Activated naive CD4-positive, alpha-beta T cell treated with anti-CD3 and anti-CD28 coated beads for 36 hours (primary cell): ENCODE measurements at regions of chr12 and their contacts with region 1.

Region 1: DNA sequence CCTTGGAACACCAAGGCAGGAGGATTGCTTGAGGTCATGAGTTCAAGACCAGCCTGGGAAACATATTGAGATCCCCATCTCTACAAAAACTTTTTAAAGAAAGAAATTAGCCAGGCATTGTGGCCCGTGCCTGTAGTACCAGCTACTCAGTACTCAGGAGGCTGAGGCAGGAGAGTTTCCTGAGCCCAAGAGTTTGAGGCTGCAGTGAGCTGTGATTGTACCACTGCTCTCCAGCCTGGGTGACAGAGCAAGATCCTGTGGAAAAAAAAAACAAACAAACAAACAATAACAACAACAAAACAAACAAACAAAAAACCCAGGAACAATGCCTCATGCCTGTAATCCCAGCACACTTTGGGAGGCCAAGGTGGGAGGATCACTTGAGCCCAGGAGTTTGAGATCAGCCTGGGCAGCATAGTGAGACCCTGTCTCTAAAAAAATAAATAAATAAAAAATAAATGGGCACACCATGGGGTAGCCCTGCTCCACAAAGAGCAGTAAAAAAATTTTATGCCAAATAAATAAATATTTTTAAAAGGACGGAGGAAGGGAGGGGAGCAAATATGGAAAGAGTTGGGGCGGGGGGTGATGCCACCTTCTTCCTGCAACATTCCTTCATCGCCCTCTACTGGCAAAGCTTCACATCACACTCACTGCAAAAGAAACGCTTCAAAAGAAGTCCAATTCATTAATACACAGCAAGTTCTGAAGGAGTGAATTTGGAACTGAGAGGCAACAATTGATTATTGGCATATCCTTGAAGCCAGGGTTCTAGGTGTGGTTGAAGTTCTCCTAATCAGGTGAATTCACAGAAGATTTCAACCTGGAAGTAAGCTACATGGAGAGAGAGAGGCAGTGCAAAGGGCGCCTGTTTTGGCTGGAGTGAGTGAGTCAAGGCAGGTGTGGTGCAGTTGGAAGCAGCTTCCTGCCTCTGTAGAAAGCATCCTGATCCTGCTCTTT is 8.8 kb upstream of the GNPTAB start:
- DNase-seq: peak; percentile 84
- H3K4me3 Mint-ChIP-seq: no peak overlapping the region
- H3K27ac Mint-ChIP-seq: no peak overlapping the region
- H3K4me1 Mint-ChIP-seq: peaks cover 5% of the 10 kb centered on the region
- H3K27me3 Mint-ChIP-seq: no peaks in the 10 kb centered on the region

Region 2: DNA sequence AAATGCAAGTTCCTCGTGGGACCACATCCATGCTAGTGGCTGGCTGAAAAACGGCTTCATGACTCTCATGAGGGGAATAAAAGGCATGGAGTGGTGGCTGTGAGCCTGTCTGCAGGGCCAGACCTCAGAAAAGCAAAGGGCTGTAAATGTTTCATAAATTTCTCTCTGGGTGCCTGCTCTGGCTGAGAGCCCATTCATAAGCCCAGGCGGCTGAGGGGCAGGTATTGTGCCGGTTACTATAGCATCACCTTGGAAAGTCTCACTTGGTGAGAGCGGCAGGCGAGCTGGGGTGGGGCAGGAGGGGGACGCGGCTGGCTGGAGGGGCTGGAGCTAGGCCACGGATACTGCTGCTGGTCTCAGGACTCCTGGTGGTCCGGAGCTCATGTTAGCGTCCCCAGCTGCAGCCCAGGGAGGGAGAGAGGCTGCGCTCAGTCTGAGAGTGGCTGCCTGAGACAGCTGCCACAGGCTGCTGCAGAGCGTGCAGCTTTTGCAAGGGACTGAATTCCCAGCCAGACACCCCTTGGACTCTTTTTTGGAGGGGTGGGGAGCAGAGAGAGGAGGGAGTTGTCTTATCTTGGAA is 1482.9 kb before region 1 on chr12 and contains the start of gene SLC17A8:
- CTCF ChIA-PET with region 1: no interaction called
- intact Hi-C with region 1: no loop called
- DNase-seq: no peak
- H3K4me3 Mint-ChIP-seq: no peak within 1 kb of the TSS
- H3K27ac Mint-ChIP-seq: no peak within 1 kb of the TSS
- H3K4me1 Mint-ChIP-seq: no peaks in the 10 kb centered on the region
- H3K27me3 Mint-ChIP-seq: peaks cover 20% of the 10 kb centered on the region
- total RNA-seq, gene SLC17A8: not detected

Region 3: GRCh38 chr12:101759396-101760047 is 80.1 kb before region 1 on chr12:
- CTCF ChIA-PET with region 1: interaction called, 13 read pairs
- intact Hi-C with region 1: no loop called
- DNase-seq: no peak
- H3K4me3 Mint-ChIP-seq: no peak overlapping the region
- H3K27ac Mint-ChIP-seq: no peak overlapping the region
- H3K4me1 Mint-ChIP-seq: no peaks in the 10 kb centered on the region
- H3K27me3 Mint-ChIP-seq: no peaks in the 10 kb centered on the region

Region 4: DNA sequence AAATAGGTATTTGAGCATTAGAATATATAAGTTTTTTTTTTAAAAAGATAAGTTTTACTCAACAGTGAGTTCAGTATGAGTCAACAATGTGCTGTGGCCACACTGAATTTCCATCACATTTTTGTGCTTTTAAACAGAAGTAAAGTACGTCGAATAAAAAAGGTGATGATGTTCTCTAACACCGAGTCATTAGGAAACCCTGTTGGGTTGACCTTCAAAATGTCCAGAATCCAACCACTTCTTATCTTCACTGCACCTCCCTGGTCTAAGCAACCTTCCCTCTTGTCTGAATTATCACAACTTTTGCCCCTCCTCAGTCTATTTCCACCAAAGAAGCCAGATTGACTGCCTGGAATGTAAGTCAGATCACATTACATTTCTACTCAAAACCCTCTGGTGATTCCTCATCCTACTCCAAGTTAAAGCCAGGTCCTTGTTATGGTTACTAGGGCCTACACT is 57.3 kb before region 1 on chr12:
- CTCF ChIA-PET with region 1: interaction called, 17 read pairs
- intact Hi-C with region 1: no loop called
- DNase-seq: no peak
- H3K4me3 Mint-ChIP-seq: no peak overlapping the region
- H3K27ac Mint-ChIP-seq: no peak overlapping the region
- H3K4me1 Mint-ChIP-seq: peaks cover 15% of the 10 kb centered on the region
- H3K27me3 Mint-ChIP-seq: no peaks in the 10 kb centered on the region

Region 5: GRCh38 chr12:101823891-101824290 is 15.7 kb before region 1 on chr12:
- CTCF ChIA-PET with region 1: interaction called, 75 read pairs
- intact Hi-C with region 1: no loop called
- DNase-seq: peak; percentile 74
- H3K4me3 Mint-ChIP-seq: no peak overlapping the region
- H3K27ac Mint-ChIP-seq: peak overlapping the region; percentile 48
- H3K4me1 Mint-ChIP-seq: peaks cover 76% of the 10 kb centered on the region
- H3K27me3 Mint-ChIP-seq: no peaks in the 10 kb centered on the region

Region 6: GRCh38 chr12:101876861-101877815 is 37.5 kb after region 1 on chr12 and contains the start of gene DRAM1:
- CTCF ChIA-PET with region 1: interaction called, 8 read pairs
- intact Hi-C with region 1: loop called (anchors 2 kb)
- DNase-seq: peak; percentile 83
- H3K4me3 Mint-ChIP-seq: peak within 1 kb of the TSS; percentile 91
- H3K27ac Mint-ChIP-seq: peak within 1 kb of the TSS; percentile 64
- H3K4me1 Mint-ChIP-seq: peaks cover 12% of the 10 kb centered on the region
- H3K27me3 Mint-ChIP-seq: peaks cover 3% of the 10 kb centered on the region
- total RNA-seq, gene DRAM1: 4.1 to 4.9 TPM